AG04449 (cell line): ENCODE measurements at regions of chr10 and their contacts with region 1.

Region 1: GRCh38 chr10:86945361-86946212 is 11.8 kb downstream of the MMRN2 start:
- DNase-seq: no peak
- H3K4me3 ChIP-seq: no peak overlapping the region
- CTCF ChIP-seq: peak; percentile 55

Region 2: GRCh38 chr10:86614853-86615252 is 330.7 kb before region 1 on chr10:
- CTCF ChIA-PET with region 1: no interaction called
- POLR2A ChIA-PET with region 1: no interaction called
- DNase-seq: no peak
- H3K4me3 ChIP-seq: no peak overlapping the region
- CTCF ChIP-seq: no peak

Region 3: DNA sequence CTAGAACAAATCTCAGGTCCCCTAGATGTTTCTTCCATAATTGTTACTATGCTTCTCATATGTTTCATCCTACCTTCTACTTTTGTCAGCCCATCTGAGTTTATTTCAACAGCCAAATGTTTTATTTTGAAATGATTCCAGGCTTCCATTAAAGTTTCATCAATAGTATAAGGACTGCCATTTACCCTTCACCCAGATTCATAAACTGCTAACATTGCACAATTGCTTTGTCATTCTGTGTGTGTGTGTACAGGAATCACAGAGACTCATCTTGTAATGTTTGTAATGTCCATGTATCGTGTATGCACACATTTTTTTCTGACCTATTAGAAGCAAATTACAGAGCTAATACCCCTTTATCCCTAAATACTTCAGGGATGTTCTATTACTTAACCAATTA is 13.7 kb before region 1 on chr10:
- CTCF ChIA-PET with region 1: interaction called, 18 read pairs
- POLR2A ChIA-PET with region 1: no interaction called
- DNase-seq: peak; percentile 26
- H3K4me3 ChIP-seq: no peak overlapping the region
- CTCF ChIP-seq: no peak

Region 4: GRCh38 chr10:86960003-86960862 is 14.6 kb after region 1 on chr10:
- CTCF ChIA-PET with region 1: interaction called, 171 read pairs
- POLR2A ChIA-PET with region 1: no interaction called
- DNase-seq: no peak
- H3K4me3 ChIP-seq: no peak overlapping the region
- CTCF ChIP-seq: peak; percentile 93